ENCODE measurements at regions of chr16 and their contacts with region 1.

Region 1: DNA sequence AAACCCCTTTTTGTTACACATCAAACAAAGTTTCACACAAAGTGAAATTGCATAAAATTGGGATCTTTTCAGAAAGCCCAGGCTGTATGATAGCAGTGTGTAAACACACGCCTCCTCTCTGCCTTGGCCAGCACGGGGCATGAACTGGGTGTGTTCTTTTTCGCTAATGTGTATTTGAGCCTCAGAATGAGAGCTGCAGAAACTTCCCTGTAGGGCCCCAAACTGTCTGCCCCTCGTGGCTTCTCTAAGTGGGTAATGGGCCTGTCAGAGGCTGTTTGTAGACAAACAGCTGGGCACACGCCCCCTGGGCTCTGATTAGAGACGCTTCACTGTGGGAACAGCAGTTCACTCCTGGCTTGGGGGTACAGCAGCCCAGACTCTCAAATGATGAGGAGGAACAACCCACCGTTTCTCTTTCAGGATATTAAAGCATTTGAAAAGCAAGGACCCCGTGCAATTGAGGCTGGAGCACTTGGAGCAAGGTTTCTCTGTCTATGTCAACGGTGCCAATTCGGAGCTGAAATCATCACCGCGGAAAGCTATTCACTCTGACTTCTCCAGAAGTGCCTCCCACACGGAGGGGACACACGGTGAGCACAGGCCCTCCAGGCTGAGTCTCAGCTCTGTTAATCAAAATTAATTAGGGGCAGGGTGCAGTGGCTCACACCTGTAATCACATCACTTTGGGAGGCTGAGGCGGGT is 78.4 kb downstream of the KATNIP start:
- DNase-seq: no peak
- ATAC-seq: no peak
- H3K4me3 ChIP-seq: no peak overlapping the region
- H3K27ac ChIP-seq: no peak overlapping the region
- H3K4me1 ChIP-seq: no peaks in the 10 kb centered on the region
- CTCF ChIP-seq: no peak
- EP300 ChIP-seq: no peak
- POLR2A ChIP-seq: no peak
- RAD21 ChIP-seq: no peak

Region 2: DNA sequence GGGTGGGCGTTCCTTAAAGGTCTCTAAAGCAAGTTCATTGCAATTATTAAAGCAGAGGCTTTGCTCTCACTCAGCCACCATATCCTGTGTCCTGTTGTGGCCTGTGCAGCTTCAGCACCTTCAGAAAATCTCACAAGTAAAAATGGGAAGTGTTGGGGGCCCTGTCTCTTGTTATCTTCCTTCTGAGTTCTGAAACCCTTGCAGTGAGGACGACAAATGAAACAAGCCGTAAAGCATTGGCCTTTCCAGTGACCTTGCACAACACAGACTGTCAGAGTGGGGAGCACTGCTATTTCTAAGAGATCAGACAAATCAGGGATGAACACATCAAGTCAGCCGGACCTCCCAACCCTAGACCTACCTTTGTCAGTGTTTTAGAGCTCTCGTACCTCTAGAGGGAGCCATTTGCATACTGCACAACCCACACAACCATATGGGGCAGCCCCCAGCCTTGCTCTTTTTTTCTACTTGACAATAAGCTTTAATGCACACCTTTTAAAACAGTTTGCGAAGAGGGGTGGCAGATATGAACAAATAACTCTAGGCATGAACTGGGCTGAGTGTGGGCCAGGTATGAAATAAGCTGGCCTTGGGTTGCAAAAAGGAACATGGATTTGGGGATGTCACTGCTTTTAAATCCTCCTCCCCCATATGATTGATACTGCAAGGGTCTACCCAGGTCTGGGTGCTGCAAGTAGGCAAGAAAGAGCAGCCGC is 11.3 kb after region 1 on chr16:
- CTCF ChIA-PET with region 1: interaction called, 50 read pairs
- POLR2A ChIA-PET with region 1: no interaction called
- DNase-seq: peak; percentile 53 to 57
- ATAC-seq: peak; percentile 80 to 93; a peak in 5 of 6 replicates
- H3K4me3 ChIP-seq: no peak overlapping the region
- H3K27ac ChIP-seq: no peak overlapping the region
- H3K4me1 ChIP-seq: no peaks in the 10 kb centered on the region
- CTCF ChIP-seq: peak; percentile 75
- EP300 ChIP-seq: no peak
- POLR2A ChIP-seq: no peak
- RAD21 ChIP-seq: peak; percentile 73 to 75

Measured in A549 (cell line).